Posterior cingulate gyrus (tissue), 11 donors: ENCODE measurements at regions of chr5 and their contacts with region 1.

Region 1: DNA sequence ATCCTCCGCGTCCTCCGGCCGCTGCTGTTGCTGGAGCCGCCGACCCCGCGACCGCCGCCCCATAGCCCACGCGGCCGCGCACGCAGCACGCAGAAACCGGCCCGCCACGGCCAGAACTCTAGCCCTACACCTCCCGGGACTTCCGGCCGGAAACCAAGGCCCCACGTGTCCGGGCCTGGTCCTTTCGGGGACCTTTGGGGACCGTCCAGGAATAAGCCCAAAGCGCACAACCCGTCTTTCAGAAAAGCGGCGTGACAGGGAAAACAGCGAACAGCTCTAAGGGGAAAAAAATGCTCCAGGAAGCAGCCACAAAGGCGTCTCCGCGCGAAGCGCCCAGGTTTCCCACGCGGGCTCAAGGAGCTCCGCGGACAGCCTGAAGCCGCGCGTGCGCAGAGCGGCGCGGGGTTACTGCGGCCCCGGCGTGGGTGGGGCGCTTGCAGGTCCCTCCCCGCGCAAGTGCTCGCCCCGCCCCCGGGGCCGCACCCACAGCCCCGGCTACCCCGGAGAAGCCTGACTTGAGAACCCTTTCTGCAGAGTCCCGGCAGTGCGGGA is at the starts of genes NSUN2 and SRD5A1:
- DNase-seq: peak; percentile 81 to 99 (median 90)

Region 2: GRCh38 chr5:6700074-6700684 is 67.2 kb after region 1 on chr5:
- intact Hi-C with region 1: no loop called
- DNase-seq: no peak

Region 3: DNA sequence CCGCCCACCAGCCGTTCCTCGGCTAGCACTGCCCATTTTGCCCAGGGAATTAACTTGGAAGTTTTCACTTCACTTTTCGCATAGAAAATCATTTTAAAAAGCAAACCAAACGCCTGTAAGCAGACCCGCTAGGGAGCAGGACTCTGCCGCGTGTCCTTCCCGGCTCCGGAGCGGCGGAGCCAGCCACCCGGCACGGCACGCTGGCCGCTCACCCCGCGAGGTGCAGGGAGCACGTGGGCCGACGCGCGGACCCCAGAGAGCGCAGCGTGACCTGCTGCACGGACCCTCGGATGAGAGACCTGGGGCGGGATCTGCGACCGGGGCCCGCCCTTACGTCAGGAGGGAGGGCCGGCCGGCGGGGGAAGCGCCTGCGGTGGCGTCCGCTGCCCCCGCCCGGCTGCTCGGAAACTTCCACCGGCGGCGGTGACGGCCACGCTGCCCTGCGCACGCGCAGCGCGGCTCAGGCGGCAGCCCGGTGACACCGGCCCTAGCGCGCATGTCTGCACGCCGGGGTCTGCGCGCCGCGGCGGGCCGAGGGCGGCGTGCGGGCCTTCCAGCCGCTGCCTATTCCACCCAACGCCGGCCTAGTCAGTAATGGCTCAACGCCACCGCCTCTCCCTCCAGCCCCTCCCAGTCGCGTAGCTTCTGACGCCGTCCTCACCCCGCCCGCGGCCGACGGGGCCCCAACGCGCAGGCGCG is 79.7 kb after region 1 on chr5:
- intact Hi-C with region 1: loop called (anchors 1 kb)
- DNase-seq: peak; percentile 92 to 99 (median 94)

Region 4: GRCh38 chr5:6745706-6746222 is 112.8 kb after region 1 on chr5:
- intact Hi-C with region 1: loop called (anchors 10 kb)
- DNase-seq: no peak